Panc1 (cell line): ENCODE measurements at regions of chr12 and their contacts with region 1.

Region 1: GRCh38 chr12:101909646-101910045 is 32.3 kb downstream of the DRAM1 start:
- DNase-seq: no peak
- ATAC-seq: no peak
- H3K4me3 ChIP-seq: no peak overlapping the region
- H3K27ac ChIP-seq: no peak overlapping the region
- H3K4me1 ChIP-seq: no peaks in the 10 kb centered on the region
- H3K27me3 ChIP-seq: no peaks in the 10 kb centered on the region
- CTCF ChIP-seq: no peak

Region 2: GRCh38 chr12:101521136-101521535 is 388.5 kb before region 1 on chr12:
- CTCF ChIA-PET with region 1: no interaction called
- POLR2A ChIA-PET with region 1: no interaction called
- in situ Hi-C with region 1: no loop called
- intact Hi-C with region 1: no loop called
- DNase-seq: no peak
- ATAC-seq: no peak
- H3K4me3 ChIP-seq: no peak overlapping the region
- H3K27ac ChIP-seq: no peak overlapping the region
- H3K4me1 ChIP-seq: no peaks in the 10 kb centered on the region
- H3K27me3 ChIP-seq: no peaks in the 10 kb centered on the region
- CTCF ChIP-seq: no peak

Region 3: DNA sequence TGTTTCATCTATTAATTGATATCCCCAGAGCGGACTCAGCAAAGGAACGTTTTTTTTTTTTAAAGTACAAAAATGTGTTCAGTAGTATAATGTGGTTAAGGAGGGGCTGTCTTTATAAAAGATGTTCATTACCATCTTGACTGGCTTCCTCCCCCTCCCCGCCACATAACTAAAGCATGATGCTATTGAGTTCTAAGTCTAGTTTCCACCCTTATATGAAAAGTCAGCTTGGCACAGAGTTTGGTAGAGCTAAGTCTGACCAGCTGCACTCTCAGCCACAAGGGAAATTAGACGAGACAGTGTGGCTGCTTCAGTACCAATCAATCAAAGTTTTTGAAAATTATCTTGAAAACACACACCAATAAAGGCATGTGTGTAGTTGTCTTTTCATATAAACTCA is 316.7 kb before region 1 on chr12:
- CTCF ChIA-PET with region 1: no interaction called
- POLR2A ChIA-PET with region 1: no interaction called
- in situ Hi-C with region 1: no loop called
- intact Hi-C with region 1: no loop called
- DNase-seq: no peak
- ATAC-seq: no peak
- H3K4me3 ChIP-seq: no peak overlapping the region
- H3K27ac ChIP-seq: no peak overlapping the region
- H3K4me1 ChIP-seq: no peaks in the 10 kb centered on the region
- H3K27me3 ChIP-seq: peaks cover 5% of the 10 kb centered on the region; the same call in 1 of the 2 replicates
- CTCF ChIP-seq: no peak

Region 4: DNA sequence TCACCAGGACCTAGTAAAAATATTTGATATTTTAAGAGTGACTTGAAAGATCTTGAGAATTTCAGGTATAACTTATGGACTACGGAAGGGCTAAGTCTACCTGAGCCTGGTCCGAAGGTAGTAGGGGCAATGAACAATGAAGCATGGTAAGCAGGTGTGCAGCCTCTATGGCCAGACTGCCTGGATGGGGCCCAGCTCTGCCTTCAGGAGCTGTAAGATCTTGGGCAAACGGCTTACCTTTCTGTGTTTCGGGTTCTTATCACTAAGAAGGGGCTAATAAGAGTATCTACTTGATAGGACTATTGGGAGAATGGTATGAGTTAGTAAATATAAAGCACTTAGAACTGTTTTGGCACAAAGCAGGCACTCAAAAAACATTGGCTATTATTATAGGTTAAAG is 171.2 kb after region 1 on chr12:
- CTCF ChIA-PET with region 1: no interaction called
- POLR2A ChIA-PET with region 1: interaction called, 10 read pairs
- in situ Hi-C with region 1: no loop called
- intact Hi-C with region 1: no loop called
- DNase-seq: no peak
- ATAC-seq: no peak
- H3K4me3 ChIP-seq: no peak overlapping the region
- H3K27ac ChIP-seq: no peak overlapping the region
- H3K4me1 ChIP-seq: no peaks in the 10 kb centered on the region
- H3K27me3 ChIP-seq: no peaks in the 10 kb centered on the region
- CTCF ChIP-seq: no peak